Calu3 (cell line): ENCODE measurements at regions of chr1 and their contacts with region 1.

Region 1: DNA sequence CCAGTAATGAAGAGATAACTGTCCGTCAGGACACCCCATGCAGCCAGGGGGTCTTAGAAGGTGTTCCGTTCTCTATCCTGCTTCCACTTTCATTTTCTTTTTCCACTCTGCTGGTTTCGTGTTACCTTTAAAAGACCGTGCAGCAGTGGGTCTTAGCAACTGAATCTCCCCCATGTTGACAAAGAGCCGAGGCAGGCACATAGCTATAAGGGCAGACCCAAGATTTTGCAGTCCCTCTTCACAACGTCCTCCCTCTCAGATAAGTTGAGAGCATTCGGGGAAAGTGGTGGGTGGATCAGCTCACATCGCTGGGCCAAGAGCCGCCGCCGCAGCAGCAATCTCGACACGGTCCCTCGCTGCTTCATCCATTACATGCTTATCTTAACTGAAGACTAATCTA is 355.5 kb downstream of the LMO4 start:
- DNase-seq: no peak
- H3K4me3 Mint-ChIP-seq: peak overlapping the region; percentile 77
- H3K27ac Mint-ChIP-seq: peak overlapping the region; percentile 77
- H3K4me1 Mint-ChIP-seq: peaks cover 58% of the 10 kb centered on the region
- H3K27me3 Mint-ChIP-seq: no peaks in the 10 kb centered on the region
- CTCF ChIP-seq: no peak

Region 2: GRCh38 chr1:87335175-87335884 is 348.9 kb before region 1 on chr1:
- CTCF ChIA-PET with region 1: no interaction called
- intact Hi-C with region 1: loop called (anchors 5 kb)
- DNase-seq: peak; percentile 72
- H3K4me3 Mint-ChIP-seq: peak overlapping the region; percentile 94
- H3K27ac Mint-ChIP-seq: peak overlapping the region; percentile 87
- H3K4me1 Mint-ChIP-seq: peaks cover 32% of the 10 kb centered on the region
- H3K27me3 Mint-ChIP-seq: no peaks in the 10 kb centered on the region
- CTCF ChIP-seq: no peak

Region 3: GRCh38 chr1:87735750-87736149 is 51.6 kb after region 1 on chr1:
- CTCF ChIA-PET with region 1: no interaction called
- intact Hi-C with region 1: loop called (anchors 2 kb)
- DNase-seq: no peak
- H3K4me3 Mint-ChIP-seq: no peak overlapping the region
- H3K27ac Mint-ChIP-seq: no peak overlapping the region
- H3K4me1 Mint-ChIP-seq: peaks cover 35% of the 10 kb centered on the region
- H3K27me3 Mint-ChIP-seq: no peaks in the 10 kb centered on the region
- CTCF ChIP-seq: no peak

Region 4: DNA sequence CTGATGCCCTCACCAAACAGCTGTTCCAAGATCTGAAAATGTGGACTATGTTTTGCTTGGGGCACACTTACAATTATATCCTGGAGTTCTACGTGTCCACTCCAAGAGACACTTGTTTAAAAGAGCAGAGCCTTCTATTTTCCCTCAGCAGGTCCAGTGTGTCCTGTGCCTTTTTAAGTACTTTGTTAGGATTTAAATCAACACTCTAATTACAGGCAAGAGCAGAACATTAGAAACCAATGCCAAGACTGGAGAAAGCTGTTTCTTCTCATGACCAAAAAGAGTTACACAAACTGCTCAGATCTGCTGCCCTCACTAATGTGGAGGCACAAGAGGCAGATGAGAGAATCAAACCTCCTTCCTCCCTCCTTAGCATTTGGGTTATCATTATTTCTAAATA is 97.4 kb after region 1 on chr1:
- CTCF ChIA-PET with region 1: no interaction called
- intact Hi-C with region 1: loop called (anchors 5 kb)
- DNase-seq: no peak
- H3K4me3 Mint-ChIP-seq: no peak overlapping the region
- H3K27ac Mint-ChIP-seq: no peak overlapping the region
- H3K4me1 Mint-ChIP-seq: peaks cover 38% of the 10 kb centered on the region
- H3K27me3 Mint-ChIP-seq: no peaks in the 10 kb centered on the region
- CTCF ChIP-seq: no peak

Region 5: GRCh38 chr1:87805666-87806378 is 121.6 kb after region 1 on chr1:
- CTCF ChIA-PET with region 1: no interaction called
- intact Hi-C with region 1: no loop called
- DNase-seq: peak; percentile 66
- H3K4me3 Mint-ChIP-seq: peak overlapping the region; percentile 62
- H3K27ac Mint-ChIP-seq: peak overlapping the region; percentile 92
- H3K4me1 Mint-ChIP-seq: peaks cover 61% of the 10 kb centered on the region
- H3K27me3 Mint-ChIP-seq: no peaks in the 10 kb centered on the region
- CTCF ChIP-seq: no peak

Region 6: DNA sequence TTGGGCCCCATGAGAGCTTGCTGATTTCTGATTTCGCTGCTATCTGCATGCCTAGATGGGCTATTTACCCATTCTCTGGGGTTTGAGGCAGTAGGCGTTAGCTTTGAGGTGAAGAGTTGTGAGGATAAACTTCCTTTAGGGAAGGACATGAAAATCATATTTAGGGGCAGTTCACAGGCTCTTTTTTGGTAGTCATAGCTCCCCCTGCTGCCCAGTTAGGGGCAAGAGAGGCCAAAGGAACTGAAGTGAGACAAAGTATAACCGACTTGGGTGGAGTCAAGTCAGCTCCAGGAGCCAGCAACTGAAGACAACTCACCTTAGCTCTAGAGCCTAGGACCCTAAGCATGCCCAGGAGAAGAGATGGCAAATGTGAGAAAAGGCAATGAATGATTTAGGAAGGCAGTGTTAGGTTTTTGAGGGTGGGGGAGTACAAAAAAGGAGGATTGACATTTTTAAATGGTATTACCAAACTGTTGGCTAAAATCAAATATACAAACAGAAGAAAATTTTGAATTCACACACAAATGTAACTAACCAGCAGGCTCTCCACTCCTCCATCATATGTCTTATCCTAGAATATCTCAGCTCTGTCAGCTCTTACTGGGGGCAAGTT is 269.6 kb after region 1 on chr1:
- CTCF ChIA-PET with region 1: no interaction called
- intact Hi-C with region 1: loop called (anchors 5 kb)
- DNase-seq: peak; percentile 75
- H3K4me3 Mint-ChIP-seq: no peak overlapping the region
- H3K27ac Mint-ChIP-seq: peak overlapping the region; percentile 50
- H3K4me1 Mint-ChIP-seq: peaks cover 33% of the 10 kb centered on the region
- H3K27me3 Mint-ChIP-seq: no peaks in the 10 kb centered on the region
- CTCF ChIP-seq: peak; percentile 66

Region 7: DNA sequence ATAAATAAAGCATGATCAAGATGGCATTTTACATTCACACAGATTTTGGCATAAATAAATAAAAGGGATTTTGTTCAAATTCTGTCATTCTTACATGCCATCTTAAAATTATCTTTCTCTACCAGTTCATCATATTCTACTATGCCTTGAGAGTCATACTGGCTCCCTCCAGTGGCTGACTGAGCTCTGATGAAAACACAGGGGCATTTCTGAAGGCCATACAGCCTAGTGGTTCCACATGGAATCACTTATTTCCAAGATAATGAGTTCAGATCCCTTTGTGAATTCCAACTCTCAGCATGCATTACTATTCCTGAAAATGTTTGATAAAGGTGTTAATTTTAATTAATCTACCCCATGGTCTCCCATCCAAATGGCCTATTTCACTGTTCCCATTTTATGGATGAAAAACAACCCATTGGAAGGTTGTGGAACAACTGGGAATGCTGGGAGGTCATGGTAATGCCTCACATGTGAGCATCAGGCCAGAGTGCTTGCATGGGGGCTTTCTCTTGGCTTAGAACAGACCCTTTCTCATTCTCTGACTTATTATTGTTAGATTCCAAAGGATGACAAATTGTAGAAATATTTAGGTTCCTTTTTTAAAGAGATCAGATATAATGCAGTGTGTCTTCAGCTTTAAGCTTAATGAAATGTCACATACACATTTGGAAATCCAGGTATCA is 377.4 kb after region 1 on chr1:
- CTCF ChIA-PET with region 1: no interaction called
- intact Hi-C with region 1: loop called (anchors 10 kb)
- DNase-seq: peak; percentile 69
- H3K4me3 Mint-ChIP-seq: no peak overlapping the region
- H3K27ac Mint-ChIP-seq: no peak overlapping the region
- H3K4me1 Mint-ChIP-seq: peaks cover 35% of the 10 kb centered on the region
- H3K27me3 Mint-ChIP-seq: no peaks in the 10 kb centered on the region
- CTCF ChIP-seq: peak; percentile 71